Common myeloid progenitor, CD34-positive (primary cell): ENCODE measurements at regions of chr5 and their contacts with region 1.

Region 1: DNA sequence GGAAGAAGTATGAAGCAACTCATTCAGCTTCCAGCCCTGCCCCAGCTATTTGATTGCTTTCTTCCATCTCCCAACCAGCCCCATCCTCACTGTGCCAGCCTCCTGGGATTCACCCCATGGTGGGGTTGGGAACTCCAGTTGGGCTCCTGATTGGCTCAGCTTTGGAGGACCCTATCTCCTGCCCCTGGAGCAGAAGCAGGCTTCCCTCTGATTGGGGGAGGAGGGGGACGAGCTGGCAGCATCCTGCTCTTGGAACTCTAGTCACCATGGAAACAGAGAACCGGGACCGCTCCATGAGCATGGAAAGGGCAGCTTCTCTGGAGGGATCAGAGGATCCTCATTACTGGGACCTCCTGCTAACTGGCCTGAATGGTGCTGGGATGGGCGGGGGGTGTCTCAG is 2.6 kb downstream of the SLC6A7 start:
- DNase-seq: no peak
- H3K4me3 ChIP-seq: no peak overlapping the region
- H3K27ac ChIP-seq: no peak overlapping the region
- H3K4me1 ChIP-seq: peaks cover 0 to 7% (median 2%) of the 10 kb centered on the region in 4 experiments
- H3K27me3 ChIP-seq: peaks cover 0 to 53% (median 38%) of the 10 kb centered on the region in 5 experiments

Region 2: GRCh38 chr5:150000256-150000989 is 192.0 kb before region 1 on chr5 and contains the starts of genes HMGXB3 and TIGD6:
- CTCF ChIA-PET with region 1: no interaction called
- POLR2A ChIA-PET with region 1: no interaction called
- DNase-seq: peak; percentile 93 to 98 (median 96)
- H3K4me3 ChIP-seq: peak within 1 kb of the TSS; percentile 82 to 93 (median 89)
- H3K27ac ChIP-seq: peak within 1 kb of the TSS; percentile 61 to 87
- H3K4me1 ChIP-seq: peaks cover 11 to 33% (median 30%) of the 10 kb centered on the region in 4 experiments
- H3K27me3 ChIP-seq: no peaks in the 10 kb centered on the region

Region 3: DNA sequence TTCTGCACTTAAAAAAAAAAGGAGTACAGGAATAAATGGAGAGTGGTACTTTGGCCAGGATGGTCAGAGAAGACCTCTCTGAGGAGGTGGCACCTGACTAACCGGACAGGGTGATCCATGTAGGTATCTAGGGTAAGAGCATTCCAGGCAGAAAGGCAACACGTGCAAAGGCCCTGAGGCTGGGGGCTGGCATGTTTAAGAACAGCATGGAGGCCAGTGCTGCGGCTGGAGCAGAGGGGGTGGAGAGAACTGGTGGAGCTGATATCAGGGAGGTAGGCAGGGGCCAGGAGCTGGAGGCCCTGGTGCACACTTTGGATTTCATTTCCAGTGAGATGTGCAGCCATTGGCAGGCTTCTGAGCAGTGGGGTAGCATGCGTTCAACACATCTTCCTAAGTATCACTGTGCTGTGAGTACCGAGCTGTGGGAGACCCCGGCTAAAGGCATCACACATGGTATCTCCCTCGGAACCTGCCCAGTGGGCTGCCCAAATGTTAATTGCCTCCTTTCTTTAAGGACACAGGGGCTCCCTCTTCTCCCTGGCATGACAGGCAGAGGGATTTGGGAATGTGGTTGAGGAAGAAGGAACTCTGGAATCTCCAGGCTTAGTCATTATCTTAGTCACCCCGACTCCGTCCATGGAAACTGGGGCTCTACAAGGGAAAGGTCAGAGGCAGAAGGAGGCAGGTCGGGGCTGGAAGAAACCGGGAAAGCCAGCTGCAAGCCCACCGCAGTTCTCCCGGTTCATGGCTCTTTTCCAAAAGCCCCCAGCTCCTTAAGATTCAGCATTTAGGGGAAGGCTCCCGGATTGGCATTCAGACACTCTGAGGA is 15.9 kb after region 1 on chr5:
- CTCF ChIA-PET with region 1: interaction called, 11 read pairs
- POLR2A ChIA-PET with region 1: no interaction called
- DNase-seq: no peak
- H3K4me3 ChIP-seq: peak overlapping the region in 3 of 7 experiments; percentile 43 to 58 (median 48)
- H3K27ac ChIP-seq: no peak overlapping the region
- H3K4me1 ChIP-seq: peaks cover 5 to 27% (median 26%) of the 10 kb centered on the region in 4 experiments
- H3K27me3 ChIP-seq: peaks cover 0 to 13% (median 5%) of the 10 kb centered on the region in 5 experiments